Ascending aorta (tissue), 2 donors: ENCODE measurements at regions of chr10 and their contacts with region 1.

Region 1: DNA sequence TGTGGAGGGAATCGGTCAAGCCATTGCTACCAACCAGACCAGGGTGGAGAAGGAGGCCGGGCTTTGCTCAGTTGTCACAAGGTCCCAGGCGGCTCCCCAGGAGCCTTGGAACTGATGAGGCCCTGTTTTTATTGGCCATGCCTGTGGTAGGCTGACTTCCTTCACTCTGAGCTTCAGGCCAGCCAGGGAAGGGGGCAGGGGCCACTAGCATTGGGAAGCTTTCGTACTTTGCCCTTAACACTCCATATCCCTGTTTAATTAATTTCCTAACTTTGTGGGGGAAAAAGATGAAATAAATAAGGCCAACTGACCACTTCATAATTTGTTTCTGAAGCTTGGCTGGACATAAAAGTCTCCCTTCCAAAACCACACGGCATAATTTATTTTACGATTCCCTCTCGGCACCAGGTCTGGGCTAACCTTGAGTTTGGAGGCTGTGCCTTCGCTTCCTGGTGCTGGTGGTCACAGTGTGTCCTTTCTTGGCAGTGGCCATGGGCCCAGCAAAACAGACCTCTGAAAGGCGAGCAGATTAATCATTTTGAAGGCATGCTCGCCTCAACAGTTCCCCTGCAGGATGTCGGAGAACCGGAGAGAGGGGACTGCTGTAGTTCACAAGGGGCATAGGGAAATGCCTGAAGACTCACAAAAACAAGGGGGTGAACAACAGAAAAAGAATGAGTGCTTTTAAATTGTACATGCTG is 965.9 kb downstream of the LRMDA start:
- DNase-seq: peak; percentile 46 to 89
- H3K4me3 ChIP-seq: peak overlapping the region; percentile 16 to 47
- H3K27ac ChIP-seq: peak overlapping the region; percentile 91 to 92
- H3K4me1 ChIP-seq: peaks cover 17 to 44% of the 10 kb centered on the region in 2 donors
- H3K27me3 ChIP-seq: no peaks in the 10 kb centered on the region
- CTCF ChIP-seq: peak in 2 of 3 experiments; percentile 41 to 42

Region 2: GRCh38 chr10:76185471-76186301 is 211.6 kb before region 1 on chr10:
- intact Hi-C with region 1: no loop called
- DNase-seq: no peak
- H3K4me3 ChIP-seq: no peak overlapping the region
- H3K27ac ChIP-seq: peak overlapping the region; percentile 20 to 30
- H3K4me1 ChIP-seq: peaks cover 0 to 19% of the 10 kb centered on the region in 2 donors
- H3K27me3 ChIP-seq: no peaks in the 10 kb centered on the region
- CTCF ChIP-seq: no peak

Region 3: GRCh38 chr10:76311752-76312636 is 85.3 kb before region 1 on chr10:
- intact Hi-C with region 1: loop called (anchors 5 kb)
- DNase-seq: no peak
- H3K4me3 ChIP-seq: no peak overlapping the region
- H3K27ac ChIP-seq: peak overlapping the region; percentile 72
- H3K4me1 ChIP-seq: peaks cover 5 to 30% of the 10 kb centered on the region in 2 donors
- H3K27me3 ChIP-seq: no peaks in the 10 kb centered on the region
- CTCF ChIP-seq: peak in 2 of 3 experiments; percentile 22 to 30

Region 4: GRCh38 chr10:76329891-76330575 is 67.3 kb before region 1 on chr10:
- intact Hi-C with region 1: loop called (anchors 5 kb)
- DNase-seq: no peak
- H3K4me3 ChIP-seq: no peak overlapping the region
- H3K27ac ChIP-seq: no peak overlapping the region
- H3K4me1 ChIP-seq: no peaks in the 10 kb centered on the region
- H3K27me3 ChIP-seq: no peaks in the 10 kb centered on the region
- CTCF ChIP-seq: no peak

Region 5: GRCh38 chr10:76428551-76429367 is 31.4 kb after region 1 on chr10:
- intact Hi-C with region 1: loop called (anchors 2 kb)
- DNase-seq: no peak
- H3K4me3 ChIP-seq: peak overlapping the region in 1 of 2 donors; percentile 41
- H3K27ac ChIP-seq: peak overlapping the region; percentile 86
- H3K4me1 ChIP-seq: peaks cover 10 to 42% of the 10 kb centered on the region in 2 donors
- H3K27me3 ChIP-seq: no peaks in the 10 kb centered on the region
- CTCF ChIP-seq: no peak

Region 6: GRCh38 chr10:76492026-76492425 is 94.7 kb after region 1 on chr10:
- intact Hi-C with region 1: loop called (anchors 5 kb)
- DNase-seq: no peak
- H3K4me3 ChIP-seq: no peak overlapping the region
- H3K27ac ChIP-seq: peak overlapping the region; percentile 81
- H3K4me1 ChIP-seq: peaks cover 0 to 2% of the 10 kb centered on the region in 2 donors
- H3K27me3 ChIP-seq: no peaks in the 10 kb centered on the region
- CTCF ChIP-seq: no peak

Region 7: GRCh38 chr10:76547352-76547972 is 150.1 kb after region 1 on chr10:
- intact Hi-C with region 1: loop called (anchors 1 kb)
- DNase-seq: peak in 1 of 2 donors; percentile 91
- H3K4me3 ChIP-seq: peak overlapping the region in 1 of 2 donors; percentile 42
- H3K27ac ChIP-seq: no peak overlapping the region
- H3K4me1 ChIP-seq: peaks cover 0 to 3% of the 10 kb centered on the region in 2 donors
- H3K27me3 ChIP-seq: no peaks in the 10 kb centered on the region
- CTCF ChIP-seq: peak; percentile 81 to 92 (median 84)

Region 8: GRCh38 chr10:76697923-76698322 is 300.6 kb after region 1 on chr10:
- intact Hi-C with region 1: no loop called
- DNase-seq: no peak
- H3K4me3 ChIP-seq: no peak overlapping the region
- H3K27ac ChIP-seq: no peak overlapping the region
- H3K4me1 ChIP-seq: no peaks in the 10 kb centered on the region
- H3K27me3 ChIP-seq: no peaks in the 10 kb centered on the region
- CTCF ChIP-seq: no peak